CD8-positive, alpha-beta T cell (primary cell): ENCODE measurements at regions of chr6 and their contacts with region 1.

Region 1: DNA sequence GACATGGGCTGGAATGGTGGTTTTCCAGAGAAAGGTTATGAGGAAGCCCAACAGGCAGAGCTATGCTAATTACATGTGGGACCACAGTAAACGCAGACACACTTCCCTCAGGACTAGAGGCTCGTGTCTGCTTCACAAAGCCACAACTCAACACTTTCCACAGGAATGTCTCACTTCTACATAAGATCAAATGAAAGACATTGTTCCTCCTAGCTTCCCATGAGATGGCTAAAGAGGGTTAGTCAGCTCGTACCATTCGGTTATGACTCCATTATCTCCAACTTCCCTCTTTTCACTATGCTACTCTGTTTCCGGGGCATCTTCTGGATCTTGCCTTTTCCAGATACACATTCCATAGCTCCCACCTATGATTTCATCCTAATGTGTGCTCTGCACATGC is 29.1 kb upstream of the ZC3H12D start:
- DNase-seq: no peak
- ATAC-seq: no peak
- H3K4me3 ChIP-seq: no peak overlapping the region
- H3K4me3 Mint-ChIP-seq: no peak overlapping the region
- H3K27ac ChIP-seq: no peak overlapping the region
- H3K27ac Mint-ChIP-seq: no peak overlapping the region
- H3K4me1 ChIP-seq: peaks cover 13% of the 10 kb centered on the region
- H3K4me1 Mint-ChIP-seq: peaks cover 29% of the 10 kb centered on the region
- H3K27me3 ChIP-seq: no peaks in the 10 kb centered on the region
- H3K27me3 Mint-ChIP-seq: no peaks in the 10 kb centered on the region
- CTCF ChIP-seq: no peak

Region 2: DNA sequence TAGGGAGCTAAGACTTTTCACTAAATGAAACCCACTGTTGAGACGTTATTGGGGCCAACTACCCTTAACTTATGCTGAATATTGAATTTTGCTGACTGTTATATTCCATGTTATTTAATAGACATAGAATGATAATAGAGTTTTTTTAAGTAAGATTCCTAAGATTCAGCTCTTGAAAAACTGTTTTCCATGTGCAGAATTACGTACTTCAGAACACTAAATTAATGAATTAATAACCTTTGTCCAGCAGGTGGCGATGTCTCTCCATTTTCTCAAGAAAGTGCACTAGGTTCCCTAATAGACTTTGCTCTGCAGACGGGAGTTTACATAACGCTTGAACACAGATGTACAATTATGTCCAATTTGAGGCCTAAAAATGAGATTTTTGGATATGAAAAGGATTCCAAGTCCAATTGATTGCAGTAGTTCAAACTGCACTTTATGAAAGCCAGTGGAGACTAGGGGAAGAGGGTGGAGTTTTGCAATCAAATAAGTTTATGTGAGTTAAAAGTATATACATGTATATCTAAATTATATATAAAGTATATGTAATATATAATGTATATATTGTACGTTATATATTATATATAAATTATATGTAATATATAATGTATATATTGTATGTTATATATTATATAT is 485.0 kb before region 1 on chr6:
- CTCF ChIA-PET with region 1: interaction called, 16 read pairs
- POLR2A ChIA-PET with region 1: no interaction called
- intact Hi-C with region 1: loop called (anchors 1 kb)
- DNase-seq: peak; percentile 16 to 88 (median 68)
- ATAC-seq: peak; percentile 70
- H3K4me3 ChIP-seq: no peak overlapping the region
- H3K4me3 Mint-ChIP-seq: no peak overlapping the region
- H3K27ac ChIP-seq: no peak overlapping the region
- H3K27ac Mint-ChIP-seq: no peak overlapping the region
- H3K4me1 ChIP-seq: no peaks in the 10 kb centered on the region
- H3K4me1 Mint-ChIP-seq: peaks cover 25% of the 10 kb centered on the region
- H3K27me3 ChIP-seq: no peaks in the 10 kb centered on the region
- H3K27me3 Mint-ChIP-seq: no peaks in the 10 kb centered on the region
- CTCF ChIP-seq: peak; percentile 91

Region 3: GRCh38 chr6:149473080-149474052 is 40.5 kb before region 1 on chr6:
- CTCF ChIA-PET with region 1: interaction called, 22 read pairs
- POLR2A ChIA-PET with region 1: no interaction called
- intact Hi-C with region 1: loop called in 1 of 2 experiments (anchors 10 kb)
- DNase-seq: peak in 3 of 9 experiments; percentile 37 to 57 (median 43)
- ATAC-seq: peak; percentile 74
- H3K4me3 ChIP-seq: no peak overlapping the region
- H3K4me3 Mint-ChIP-seq: peak overlapping the region; percentile 6
- H3K27ac ChIP-seq: no peak overlapping the region
- H3K27ac Mint-ChIP-seq: peak overlapping the region; percentile 64
- H3K4me1 ChIP-seq: peaks cover 31% of the 10 kb centered on the region
- H3K4me1 Mint-ChIP-seq: peaks cover 40% of the 10 kb centered on the region
- H3K27me3 ChIP-seq: no peaks in the 10 kb centered on the region
- H3K27me3 Mint-ChIP-seq: no peaks in the 10 kb centered on the region
- CTCF ChIP-seq: no peak

Region 4: GRCh38 chr6:149493761-149494320 is 20.1 kb before region 1 on chr6:
- CTCF ChIA-PET with region 1: interaction called, 26 read pairs
- POLR2A ChIA-PET with region 1: interaction called, 13 read pairs
- intact Hi-C with region 1: loop called in 1 of 2 experiments (anchors 1 kb)
- DNase-seq: no peak
- ATAC-seq: no peak
- H3K4me3 ChIP-seq: no peak overlapping the region
- H3K4me3 Mint-ChIP-seq: no peak overlapping the region
- H3K27ac ChIP-seq: no peak overlapping the region
- H3K27ac Mint-ChIP-seq: peak overlapping the region; percentile 8
- H3K4me1 ChIP-seq: peaks cover 39% of the 10 kb centered on the region
- H3K4me1 Mint-ChIP-seq: peaks cover 57% of the 10 kb centered on the region
- H3K27me3 ChIP-seq: no peaks in the 10 kb centered on the region
- H3K27me3 Mint-ChIP-seq: no peaks in the 10 kb centered on the region
- CTCF ChIP-seq: no peak

Region 5: DNA sequence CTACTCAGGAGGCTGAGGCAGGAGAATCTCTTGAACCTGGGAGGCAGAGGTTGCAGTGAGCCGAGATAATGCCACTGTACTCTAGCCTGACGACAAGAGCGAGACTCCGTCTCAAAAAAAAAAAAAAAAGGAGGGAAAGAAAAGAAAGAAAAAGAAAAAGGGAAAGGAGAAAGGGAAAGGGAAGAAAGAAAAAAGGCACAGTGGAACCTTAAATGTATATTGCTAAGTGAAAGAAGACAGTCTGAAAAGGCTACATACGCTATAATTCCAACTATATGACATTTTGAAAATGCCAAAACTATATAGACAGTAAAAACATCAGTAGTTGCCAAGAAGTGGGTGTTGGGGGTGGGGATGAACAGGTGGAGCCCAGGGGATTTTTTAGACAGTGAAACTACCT is 15.7 kb after region 1 on chr6:
- CTCF ChIA-PET with region 1: interaction called, 18 read pairs
- POLR2A ChIA-PET with region 1: no interaction called
- intact Hi-C with region 1: no loop called
- DNase-seq: no peak
- ATAC-seq: no peak
- H3K4me3 ChIP-seq: no peak overlapping the region
- H3K4me3 Mint-ChIP-seq: no peak overlapping the region
- H3K27ac ChIP-seq: no peak overlapping the region
- H3K27ac Mint-ChIP-seq: no peak overlapping the region
- H3K4me1 ChIP-seq: no peaks in the 10 kb centered on the region
- H3K4me1 Mint-ChIP-seq: peaks cover 4% of the 10 kb centered on the region
- H3K27me3 ChIP-seq: no peaks in the 10 kb centered on the region
- H3K27me3 Mint-ChIP-seq: no peaks in the 10 kb centered on the region
- CTCF ChIP-seq: no peak